Activated CD4-positive, alpha-beta memory T cell treated with anti-CD3 and anti-CD28 coated beads for 36 hours (primary cell): ENCODE measurements at regions of chrX and their contacts with region 1.

Region 1: GRCh38 chrX:136909706-136910564 is 29.4 kb upstream of the RBMX start:
- DNase-seq: peak; percentile 78
- H3K4me3 Mint-ChIP-seq: peak overlapping the region; percentile 91
- H3K27ac Mint-ChIP-seq: peak overlapping the region; percentile 90
- H3K4me1 Mint-ChIP-seq: peaks cover 15% of the 10 kb centered on the region
- H3K27me3 Mint-ChIP-seq: no peaks in the 10 kb centered on the region

Region 2: DNA sequence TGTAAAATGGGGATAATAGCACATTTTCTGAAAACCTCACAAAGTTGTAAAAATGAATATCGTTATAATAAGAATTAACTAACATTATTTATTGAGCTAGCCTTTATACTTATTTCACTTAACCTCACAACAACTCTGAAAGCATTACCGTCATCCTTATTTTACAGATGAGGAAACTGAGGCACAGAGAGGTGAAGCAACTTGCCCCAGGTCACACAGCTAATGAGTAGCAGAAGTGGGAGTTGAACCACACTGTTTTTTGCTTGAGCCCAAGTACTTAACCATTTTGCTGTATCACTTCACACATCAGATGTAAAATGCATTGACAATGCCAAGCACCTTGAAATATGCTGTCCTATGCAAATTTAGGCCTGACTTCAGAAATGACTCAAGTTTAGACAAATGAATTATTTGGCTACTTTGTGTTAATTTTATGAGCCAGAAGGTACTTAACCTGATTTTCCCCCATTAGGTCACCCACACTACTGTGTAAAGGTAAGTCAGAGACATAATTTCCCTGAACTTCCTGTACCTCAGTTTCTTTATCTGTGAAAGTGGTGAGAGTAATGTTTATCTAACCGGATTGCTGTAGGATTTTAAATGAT is 238.8 kb before region 1 on chrX:
- CTCF ChIA-PET with region 1: no interaction called
- POLR2A ChIA-PET with region 1: no interaction called
- intact Hi-C with region 1: no loop called
- DNase-seq: no peak
- H3K4me3 Mint-ChIP-seq: no peak overlapping the region
- H3K27ac Mint-ChIP-seq: peak overlapping the region; percentile 59
- H3K4me1 Mint-ChIP-seq: peaks cover 91% of the 10 kb centered on the region
- H3K27me3 Mint-ChIP-seq: no peaks in the 10 kb centered on the region

Region 3: GRCh38 chrX:136850441-136851175 is 59.3 kb before region 1 on chrX:
- CTCF ChIA-PET with region 1: no interaction called
- POLR2A ChIA-PET with region 1: no interaction called
- intact Hi-C with region 1: no loop called
- DNase-seq: no peak
- H3K4me3 Mint-ChIP-seq: no peak overlapping the region
- H3K27ac Mint-ChIP-seq: no peak overlapping the region
- H3K4me1 Mint-ChIP-seq: peaks cover 16% of the 10 kb centered on the region
- H3K27me3 Mint-ChIP-seq: no peaks in the 10 kb centered on the region

Region 4: GRCh38 chrX:136866337-136867095 is 43.4 kb before region 1 on chrX:
- CTCF ChIA-PET with region 1: no interaction called
- POLR2A ChIA-PET with region 1: no interaction called
- intact Hi-C with region 1: loop called (anchors 5 kb)
- DNase-seq: no peak
- H3K4me3 Mint-ChIP-seq: no peak overlapping the region
- H3K27ac Mint-ChIP-seq: peak overlapping the region; percentile 77
- H3K4me1 Mint-ChIP-seq: peaks cover 65% of the 10 kb centered on the region
- H3K27me3 Mint-ChIP-seq: no peaks in the 10 kb centered on the region

Region 5: DNA sequence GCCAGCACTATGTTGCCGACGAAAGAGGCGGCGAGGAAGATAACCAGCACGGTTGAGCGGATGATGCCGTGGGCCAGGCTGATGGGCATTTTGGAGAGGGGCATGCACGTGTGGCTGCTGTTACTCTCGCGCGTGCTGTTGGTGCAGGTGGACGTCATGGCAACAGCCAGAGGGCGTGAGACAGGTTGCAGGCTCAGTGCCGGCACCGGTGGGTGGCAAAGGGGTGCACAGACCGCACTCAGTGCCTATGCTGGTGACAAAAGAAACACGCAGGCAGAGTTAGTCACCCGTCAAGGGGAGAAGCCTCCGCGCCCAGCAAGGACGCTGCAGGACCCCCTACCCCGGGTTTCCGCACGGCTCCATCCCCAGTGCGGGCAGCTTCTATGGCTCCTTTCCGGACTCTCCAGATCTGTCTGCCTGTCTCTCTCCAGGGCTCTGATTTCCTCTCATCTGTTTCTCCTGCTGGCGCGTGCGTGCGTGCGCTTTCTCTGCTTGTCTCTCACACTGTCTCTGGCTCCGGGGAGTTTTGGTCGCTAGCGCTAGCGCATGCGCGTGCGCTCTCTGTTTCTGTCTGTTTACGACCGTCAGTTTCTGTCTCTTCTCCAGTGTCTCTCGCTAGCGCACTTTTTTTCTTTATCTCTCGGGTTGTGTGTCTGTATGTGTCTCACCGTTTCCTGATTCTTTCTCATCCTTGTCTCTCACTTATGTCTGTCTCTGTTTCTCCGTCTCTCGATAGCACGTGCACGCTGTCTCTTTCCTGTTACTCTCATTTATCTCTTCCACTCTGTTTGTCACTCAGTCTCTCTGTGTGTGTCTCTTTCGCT is 121.8 kb after region 1 on chrX:
- CTCF ChIA-PET with region 1: no interaction called
- POLR2A ChIA-PET with region 1: no interaction called
- intact Hi-C with region 1: no loop called
- DNase-seq: peak; percentile 61
- H3K4me3 Mint-ChIP-seq: no peak overlapping the region
- H3K27ac Mint-ChIP-seq: no peak overlapping the region
- H3K4me1 Mint-ChIP-seq: peaks cover 7% of the 10 kb centered on the region
- H3K27me3 Mint-ChIP-seq: peaks cover 39% of the 10 kb centered on the region

Region 6: DNA sequence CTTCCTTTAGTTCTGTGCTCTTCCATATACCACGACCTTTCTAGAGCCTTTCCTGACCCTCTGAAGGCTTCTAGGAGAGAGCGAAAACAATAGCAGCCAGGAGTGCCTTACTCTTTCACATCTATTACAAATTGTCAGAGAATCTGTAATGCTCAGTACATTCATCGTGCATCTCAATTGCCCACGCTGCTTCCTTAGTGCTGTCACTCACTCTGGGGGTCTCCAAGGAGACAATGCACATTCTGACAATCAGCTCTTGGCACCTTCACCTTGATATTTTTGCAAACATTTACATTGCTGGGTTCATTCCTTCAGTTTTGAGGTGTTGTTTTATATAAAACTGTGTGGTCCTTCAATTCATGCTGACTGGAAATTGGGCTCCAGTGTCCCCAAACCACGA is 233.9 kb after region 1 on chrX:
- CTCF ChIA-PET with region 1: no interaction called
- POLR2A ChIA-PET with region 1: no interaction called
- intact Hi-C with region 1: no loop called
- DNase-seq: no peak
- H3K4me3 Mint-ChIP-seq: no peak overlapping the region
- H3K27ac Mint-ChIP-seq: no peak overlapping the region
- H3K4me1 Mint-ChIP-seq: no peaks in the 10 kb centered on the region
- H3K27me3 Mint-ChIP-seq: peaks cover 6% of the 10 kb centered on the region